GM23248 (cell line): ENCODE measurements at regions of chr4 and their contacts with region 1.

Region 1: GRCh38 chr4:147866532-147867271 is 134.8 kb downstream of the ARHGAP10 start:
- DNase-seq: peak; percentile 88
- H3K4me3 ChIP-seq: no peak overlapping the region
- H3K27ac ChIP-seq: peak overlapping the region; percentile 62
- H3K4me1 ChIP-seq: peaks cover 35% of the 10 kb centered on the region
- H3K27me3 ChIP-seq: no peaks in the 10 kb centered on the region

Region 2: DNA sequence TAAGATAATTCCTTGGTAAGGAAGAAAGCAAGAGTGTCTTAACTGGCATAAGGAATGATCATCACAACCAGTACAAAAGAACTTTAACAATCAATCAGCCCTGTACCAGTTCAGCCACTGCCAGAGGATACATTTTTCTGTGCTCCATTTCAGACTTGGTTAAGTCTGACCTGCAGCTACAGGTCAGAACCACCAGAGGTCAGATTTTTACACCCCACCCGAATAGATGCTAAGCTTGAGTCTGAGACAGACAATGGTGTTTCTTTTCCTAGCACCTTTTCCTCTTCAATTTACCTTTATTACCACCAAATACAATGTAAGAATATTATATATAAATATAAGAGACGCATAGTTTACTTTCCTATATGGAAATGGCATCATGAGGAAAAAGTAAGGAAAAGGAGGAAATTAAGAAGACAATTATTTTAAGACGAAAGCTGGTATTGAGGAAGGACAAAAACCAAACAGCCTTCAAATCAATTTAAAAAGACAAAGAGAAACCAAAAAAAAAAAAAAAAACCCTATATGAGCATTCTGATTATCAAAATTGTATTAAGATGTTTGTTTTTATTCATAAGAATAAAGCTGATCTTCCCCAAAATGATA is 705.7 kb before region 1 on chr4:
- in situ Hi-C with region 1: loop called (anchors 25 kb)
- DNase-seq: peak; percentile 73
- H3K4me3 ChIP-seq: no peak overlapping the region
- H3K27ac ChIP-seq: no peak overlapping the region
- H3K4me1 ChIP-seq: 0 out of 2 replicates have a peak, but pooled peaks cover 3% of the 10 kb centered on the region
- H3K27me3 ChIP-seq: no peaks in the 10 kb centered on the region

Region 3: DNA sequence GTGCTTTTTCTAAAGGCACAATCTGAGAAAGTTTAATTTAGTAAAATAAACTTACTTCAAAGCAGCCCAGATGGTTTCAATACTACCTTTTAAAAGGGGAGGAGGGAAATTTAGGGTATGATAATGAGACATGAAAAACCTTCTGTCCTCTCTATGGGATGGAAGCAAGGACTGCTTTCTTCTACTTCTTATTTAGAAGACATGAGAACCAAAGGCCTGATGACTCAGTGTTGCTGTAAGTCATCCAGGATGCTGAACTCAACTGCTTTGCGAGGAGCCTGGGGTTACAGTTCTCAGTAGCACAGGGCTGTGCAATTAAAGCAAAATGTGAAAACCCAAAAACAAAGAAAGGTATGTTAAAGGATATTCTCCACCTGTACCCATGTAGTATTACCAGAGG is 526.6 kb before region 1 on chr4:
- in situ Hi-C with region 1: loop called (anchors 25 kb)
- DNase-seq: peak; percentile 84
- H3K4me3 ChIP-seq: no peak overlapping the region
- H3K27ac ChIP-seq: no peak overlapping the region
- H3K4me1 ChIP-seq: 0 out of 2 replicates have a peak, but pooled peaks cover 7% of the 10 kb centered on the region
- H3K27me3 ChIP-seq: no peaks in the 10 kb centered on the region

Region 4: GRCh38 chr4:147707865-147708672 is 158.6 kb before region 1 on chr4:
- in situ Hi-C with region 1: loop called (anchors 5 kb)
- DNase-seq: peak; percentile 57
- H3K4me3 ChIP-seq: no peak overlapping the region
- H3K27ac ChIP-seq: no peak overlapping the region
- H3K4me1 ChIP-seq: no peaks in the 10 kb centered on the region
- H3K27me3 ChIP-seq: no peaks in the 10 kb centered on the region

Region 5: GRCh38 chr4:148076964-148077363 is 210.3 kb after region 1 on chr4:
- in situ Hi-C with region 1: no loop called
- DNase-seq: no peak
- H3K4me3 ChIP-seq: no peak overlapping the region
- H3K27ac ChIP-seq: no peak overlapping the region
- H3K4me1 ChIP-seq: no peaks in the 10 kb centered on the region
- H3K27me3 ChIP-seq: no peaks in the 10 kb centered on the region